Heart right ventricle (tissue), 16 donors: ENCODE measurements at regions of chr21 and their contacts with region 1.

Region 1: DNA sequence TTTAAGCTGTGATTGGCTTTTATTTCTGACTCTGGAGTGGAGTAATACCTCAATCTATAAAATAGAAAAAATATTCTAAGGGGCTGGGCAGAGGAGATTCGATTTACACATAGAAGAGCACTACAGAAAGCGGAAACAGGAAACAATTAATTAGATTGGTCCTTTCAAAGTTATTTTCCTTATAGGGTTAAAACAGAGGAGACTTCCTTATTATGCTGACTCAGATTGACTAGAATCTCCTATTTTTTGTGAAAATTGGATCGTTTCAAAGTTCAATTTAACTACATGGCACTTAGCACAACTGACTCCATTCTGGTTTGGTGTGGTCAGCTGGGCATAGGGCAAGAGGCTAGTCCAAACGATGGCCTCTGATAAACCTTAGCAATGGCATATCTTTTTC is 48.3 kb upstream of the NCAM2 start:
- DNase-seq: no peak
- ATAC-seq: no peak
- H3K4me3 ChIP-seq: no peak overlapping the region
- H3K27ac ChIP-seq: no peak overlapping the region
- H3K4me1 ChIP-seq: no peaks in the 10 kb centered on the region
- H3K27me3 ChIP-seq: no peaks in the 10 kb centered on the region
- CTCF ChIP-seq: no peak

Region 2: DNA sequence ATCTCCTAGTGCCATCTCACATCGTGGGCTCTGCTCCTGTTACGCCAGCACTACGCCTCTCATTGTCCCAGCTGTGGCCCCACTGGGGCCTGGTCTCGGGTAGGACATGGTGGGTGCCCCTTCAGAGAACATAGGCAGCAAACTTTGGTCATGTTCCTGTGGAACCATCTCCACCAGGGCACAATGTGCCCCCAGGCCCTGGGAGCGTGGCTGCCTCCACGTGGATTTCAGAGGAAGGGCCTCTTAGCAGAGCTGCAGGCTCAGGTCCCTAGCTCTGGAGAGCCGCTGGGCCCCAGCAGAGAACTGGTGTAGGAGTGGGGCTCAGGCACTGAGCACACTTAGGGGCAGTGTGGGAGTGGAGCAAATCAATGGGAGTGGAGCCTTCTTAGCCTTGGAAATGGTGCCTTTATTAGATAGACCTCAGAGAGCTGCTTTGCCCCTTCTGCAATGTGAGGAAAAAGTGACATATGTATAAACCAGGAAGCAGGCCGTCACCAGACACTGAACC is 508.3 kb after region 1 on chr21:
- intact Hi-C with region 1: loop called in 1 of 10 experiments (anchors 5 kb)
- DNase-seq: peak in 1 of 2 donors; percentile 4
- ATAC-seq: no peak
- H3K4me3 ChIP-seq: no peak overlapping the region
- H3K27ac ChIP-seq: no peak overlapping the region
- H3K4me1 ChIP-seq: no peaks in the 10 kb centered on the region
- H3K27me3 ChIP-seq: no peaks in the 10 kb centered on the region
- CTCF ChIP-seq: no peak